Psoas muscle (tissue), 8 donors: ENCODE measurements at regions of chr12 and their contacts with region 1.

Region 1: DNA sequence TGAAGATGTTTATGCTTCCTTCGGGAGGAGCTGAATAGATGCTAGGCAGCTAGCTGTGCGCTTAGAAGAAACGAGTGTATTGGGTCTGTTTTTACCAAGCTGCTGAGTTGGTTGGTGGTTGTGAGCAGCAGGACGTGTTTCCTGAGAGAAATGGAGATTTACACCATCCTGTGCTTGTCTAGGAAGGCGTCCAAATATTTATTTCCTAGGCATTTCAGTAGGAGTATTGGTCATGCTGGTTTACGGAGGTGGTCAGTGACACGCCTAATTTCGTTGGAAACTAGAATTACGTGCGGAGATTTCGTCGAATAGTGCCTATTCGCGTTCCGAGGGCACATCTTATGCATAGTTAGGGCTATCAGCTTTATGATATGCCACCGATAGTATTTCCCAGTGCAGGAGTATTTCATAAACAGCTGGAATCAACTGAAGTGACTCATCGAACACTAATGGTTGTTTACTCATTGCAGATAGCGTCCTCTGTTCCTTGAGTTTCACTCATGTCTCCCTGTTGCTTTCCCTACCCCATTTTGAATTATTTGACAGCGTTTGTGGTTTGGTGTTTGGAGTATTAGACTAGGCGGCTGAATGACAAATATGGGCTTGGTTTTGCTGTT is 780 bp downstream of the TBC1D15 start:
- DNase-seq: no peak
- ATAC-seq: peak; percentile 64 to 81 (median 70)
- H3K4me3 ChIP-seq: peak overlapping the region; percentile 96
- H3K27ac ChIP-seq: peak overlapping the region; percentile 99
- H3K4me1 ChIP-seq: peaks cover 44% of the 10 kb centered on the region
- H3K27me3 ChIP-seq: no peaks in the 10 kb centered on the region
- CTCF ChIP-seq: no peak

Region 2: DNA sequence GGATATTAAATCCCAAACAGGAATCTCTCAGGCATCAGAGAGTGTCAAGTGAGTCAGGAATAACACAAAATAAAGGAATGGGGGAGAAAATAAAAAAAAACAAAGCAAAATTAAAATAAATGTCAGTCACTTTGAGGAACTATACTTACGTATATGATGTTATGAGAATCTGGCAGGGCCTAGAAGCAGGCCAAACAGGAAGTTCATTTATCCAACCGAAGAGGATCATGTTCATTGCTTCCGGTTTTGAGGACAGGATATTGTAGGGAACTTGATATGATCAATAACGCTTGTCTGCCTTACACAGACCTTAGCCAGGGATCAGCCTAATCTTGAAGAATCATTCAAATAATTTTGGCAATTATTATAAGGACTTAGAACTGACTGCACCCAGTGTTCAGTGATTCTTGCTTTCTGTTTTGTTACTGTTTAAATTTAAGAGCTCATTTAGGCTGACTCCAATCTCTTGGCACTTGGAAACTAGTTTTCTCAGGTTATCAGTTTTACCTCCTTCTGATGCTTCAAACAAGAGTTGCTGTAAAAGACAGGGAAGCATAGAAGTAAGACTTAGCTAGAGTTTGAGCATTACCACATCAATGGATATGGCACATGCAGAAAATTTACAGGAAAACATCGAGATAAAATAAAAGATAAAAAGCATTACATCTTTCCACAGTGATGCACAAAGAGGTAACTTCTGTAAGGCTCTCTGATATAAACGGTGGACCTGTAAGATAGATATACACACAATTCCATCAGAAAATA is 230.1 kb before region 1 on chr12:
- intact Hi-C with region 1: no loop called
- DNase-seq: no peak
- ATAC-seq: no peak
- H3K4me3 ChIP-seq: no peak overlapping the region
- H3K27ac ChIP-seq: no peak overlapping the region
- H3K4me1 ChIP-seq: no peaks in the 10 kb centered on the region
- H3K27me3 ChIP-seq: no peaks in the 10 kb centered on the region
- CTCF ChIP-seq: no peak

Region 3: DNA sequence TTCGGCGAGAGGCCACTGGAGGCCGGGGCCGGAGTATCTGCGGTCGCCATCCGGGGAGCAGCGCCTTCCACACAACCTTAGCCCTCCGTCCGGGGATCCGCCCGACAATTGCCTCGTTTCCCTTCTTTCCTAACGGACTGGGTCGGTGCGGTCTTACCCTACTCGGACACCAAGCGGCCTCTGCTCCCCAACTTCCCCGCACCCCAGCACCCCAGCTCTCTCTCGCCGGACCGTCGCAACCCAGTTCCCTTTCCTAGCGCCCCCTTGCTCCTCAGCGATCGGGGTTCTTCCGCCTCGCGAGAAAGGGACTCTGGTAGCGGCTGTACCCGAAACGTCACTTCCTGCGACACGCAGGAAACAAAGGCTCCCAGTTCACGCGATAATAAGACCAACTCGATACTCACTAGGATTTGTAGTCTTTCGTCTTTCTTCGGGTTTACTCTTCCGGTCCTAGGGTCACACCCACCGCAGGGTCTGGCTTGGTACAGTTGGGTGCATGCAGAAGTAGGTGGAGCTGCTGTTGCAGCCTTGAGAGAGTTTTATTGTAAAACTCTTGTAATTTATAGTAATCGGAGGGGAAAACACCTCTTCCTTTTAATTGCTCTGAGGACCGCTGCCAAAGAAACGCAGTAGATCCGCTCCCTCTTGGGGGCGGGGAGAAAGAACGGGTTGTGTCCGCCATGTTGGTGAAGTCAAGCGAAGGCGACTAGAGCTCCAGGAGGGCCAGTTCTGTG is 176.6 kb before region 1 on chr12 and contains the start of gene ZFC3H1:
- intact Hi-C with region 1: loop called (anchors 10 kb)
- DNase-seq: peak; percentile 89 to 95
- ATAC-seq: peak; percentile 94 to 96 (median 95)
- H3K4me3 ChIP-seq: peak within 1 kb of the TSS; percentile 93
- H3K27ac ChIP-seq: peak within 1 kb of the TSS; percentile 97
- H3K4me1 ChIP-seq: peaks cover 27% of the 10 kb centered on the region
- H3K27me3 ChIP-seq: no peaks in the 10 kb centered on the region
- CTCF ChIP-seq: peak; percentile 20
- total RNA-seq, gene ZFC3H1: 9.8 to 18.1 (median 15.5) TPM

Region 4: DNA sequence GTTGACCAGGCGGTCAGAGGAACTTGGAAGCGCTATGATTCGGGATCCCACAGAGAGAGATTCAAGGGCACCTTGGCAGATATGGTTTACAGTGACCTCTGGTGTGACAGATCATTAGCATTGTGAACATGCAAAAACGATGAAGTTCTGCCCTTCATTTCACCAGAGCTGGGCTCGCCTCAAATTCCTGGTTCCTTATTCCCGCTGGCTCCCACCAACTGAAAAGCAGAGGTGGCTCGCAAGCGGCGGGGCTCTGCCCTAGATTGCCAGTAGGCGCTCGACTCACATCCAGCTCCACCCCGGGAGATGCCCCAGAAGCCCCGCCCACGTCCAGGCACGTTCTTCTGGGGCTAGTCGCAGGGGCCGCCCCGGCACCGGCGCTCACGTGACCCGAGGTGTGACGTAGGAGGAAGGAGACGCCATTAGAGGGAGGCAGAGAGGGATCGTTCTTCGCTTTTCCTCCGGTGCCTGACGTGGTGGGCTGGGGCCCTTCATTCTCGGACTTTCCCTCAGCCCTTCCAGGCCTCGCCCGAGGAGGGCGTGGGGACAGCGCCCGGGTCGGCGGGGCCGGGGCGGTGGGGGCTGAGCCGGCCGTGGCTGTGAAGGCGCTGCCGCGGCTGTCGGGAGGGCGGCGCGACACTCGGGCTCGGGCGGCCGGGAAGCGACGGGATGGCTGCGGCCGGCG is 85.7 kb before region 1 on chr12 and contains the start of gene RAB21:
- intact Hi-C with region 1: loop called in 1 of 2 experiments (anchors 5 kb)
- DNase-seq: peak; percentile 99
- ATAC-seq: peak; percentile 89 to 94 (median 91)
- H3K4me3 ChIP-seq: peak within 1 kb of the TSS; percentile 91
- H3K27ac ChIP-seq: peak within 1 kb of the TSS; percentile 97
- H3K4me1 ChIP-seq: peaks cover 8% of the 10 kb centered on the region
- H3K27me3 ChIP-seq: no peaks in the 10 kb centered on the region
- CTCF ChIP-seq: peak; percentile 36
- total RNA-seq, gene RAB21: 152 to 180 (median 167) TPM

Region 5: DNA sequence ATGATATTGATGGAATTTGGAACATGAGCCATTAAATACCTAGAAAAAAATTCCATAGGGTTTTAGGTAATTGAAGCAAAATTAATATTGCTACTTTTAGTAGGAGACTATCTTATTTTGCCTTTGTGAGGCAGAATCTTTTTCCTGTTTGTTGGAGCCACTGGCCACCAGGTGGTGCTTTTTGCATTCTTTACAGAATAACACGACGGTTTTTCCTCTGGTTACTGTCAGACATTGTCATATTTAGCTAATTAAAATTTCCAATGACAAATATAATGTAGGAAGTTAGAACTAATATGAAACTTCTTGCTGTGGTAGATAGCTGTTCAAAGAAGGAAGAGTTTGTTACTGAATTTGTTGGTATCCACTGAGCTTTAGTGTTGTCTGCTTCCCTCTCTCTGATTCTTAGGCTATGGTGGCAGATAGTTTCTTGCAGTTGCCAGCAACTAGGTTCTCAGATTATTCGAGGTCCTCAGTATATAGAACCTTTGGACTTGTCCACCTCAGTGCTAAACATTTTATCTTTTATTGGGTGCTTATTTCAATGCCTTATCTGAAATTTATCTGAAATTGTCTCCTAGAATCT is 60.0 kb before region 1 on chr12:
- intact Hi-C with region 1: loop called in 1 of 2 experiments (anchors 5 kb)
- DNase-seq: no peak
- ATAC-seq: peak in 2 of 4 donors; percentile 43 to 67
- H3K4me3 ChIP-seq: no peak overlapping the region
- H3K27ac ChIP-seq: no peak overlapping the region
- H3K4me1 ChIP-seq: no peaks in the 10 kb centered on the region
- H3K27me3 ChIP-seq: no peaks in the 10 kb centered on the region
- CTCF ChIP-seq: peak; percentile 71

Region 6: GRCh38 chr12:71799106-71799505 is 41.2 kb before region 1 on chr12:
- intact Hi-C with region 1: loop called (anchors 5 kb)
- DNase-seq: no peak
- ATAC-seq: peak in 1 of 4 donors; percentile 40
- H3K4me3 ChIP-seq: no peak overlapping the region
- H3K27ac ChIP-seq: no peak overlapping the region
- H3K4me1 ChIP-seq: no peaks in the 10 kb centered on the region
- H3K27me3 ChIP-seq: no peaks in the 10 kb centered on the region
- CTCF ChIP-seq: no peak

Region 7: GRCh38 chr12:71804505-71804904 is 35.8 kb before region 1 on chr12:
- intact Hi-C with region 1: loop called (anchors 5 kb)
- DNase-seq: no peak
- ATAC-seq: no peak
- H3K4me3 ChIP-seq: no peak overlapping the region
- H3K27ac ChIP-seq: no peak overlapping the region
- H3K4me1 ChIP-seq: no peaks in the 10 kb centered on the region
- H3K27me3 ChIP-seq: peaks cover 0 to 7% (median 2%) of the 10 kb centered on the region in 3 donors
- CTCF ChIP-seq: no peak

Region 8: GRCh38 chr12:71888521-71888920 is 48.2 kb after region 1 on chr12:
- intact Hi-C with region 1: no loop called
- DNase-seq: no peak
- ATAC-seq: peak in 2 of 4 donors; percentile 33 to 40
- H3K4me3 ChIP-seq: no peak overlapping the region
- H3K27ac ChIP-seq: no peak overlapping the region
- H3K4me1 ChIP-seq: peaks cover 4% of the 10 kb centered on the region
- H3K27me3 ChIP-seq: no peaks in the 10 kb centered on the region
- CTCF ChIP-seq: no peak